Naive thymus-derived CD4-positive, alpha-beta T cell (primary cell): ENCODE measurements at regions of chrX and their contacts with region 1.

Region 1: DNA sequence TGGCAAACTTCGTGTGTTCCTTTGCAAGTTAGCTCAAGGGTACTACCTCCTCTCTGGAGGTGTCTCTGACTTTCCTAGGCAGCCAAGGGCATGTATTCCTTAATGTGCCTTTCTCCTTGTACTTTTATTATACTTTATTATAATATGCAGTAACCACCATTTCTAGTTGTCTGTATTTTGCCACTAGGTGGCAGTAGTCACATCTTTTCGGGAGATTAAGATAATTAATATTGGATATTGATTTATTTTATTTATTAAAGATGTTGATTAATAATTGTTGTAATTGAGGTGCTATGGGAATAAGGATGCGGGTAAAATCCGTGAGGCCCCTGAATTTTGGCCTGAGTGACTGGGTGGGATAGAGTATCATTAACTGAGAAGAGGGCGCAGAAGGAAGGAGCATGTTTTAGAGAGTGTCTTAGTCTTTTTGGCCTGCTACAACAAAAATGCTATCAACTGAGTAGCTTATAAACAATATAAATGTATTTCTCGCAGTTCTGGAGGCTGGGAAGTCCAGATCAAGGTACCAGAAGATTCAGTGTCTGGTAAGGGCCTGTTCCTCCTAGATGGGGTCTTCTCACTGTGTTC is 153.3 kb downstream of the TMEM164 start:
- DNase-seq: peak in 3 of 9 donors; percentile 22 to 27 (median 27)
- ATAC-seq: no peak
- H3K4me3 ChIP-seq: no peak overlapping the region
- H3K4me3 Mint-ChIP-seq: no peak overlapping the region
- H3K27ac ChIP-seq: no peak overlapping the region
- H3K27ac Mint-ChIP-seq: no peak overlapping the region
- H3K4me1 ChIP-seq: no peaks in the 10 kb centered on the region
- H3K4me1 Mint-ChIP-seq: peaks cover 5 to 14% (median 10%) of the 10 kb centered on the region in 7 donors
- H3K27me3 ChIP-seq: no peaks in the 10 kb centered on the region
- H3K27me3 Mint-ChIP-seq: no peaks in the 10 kb centered on the region

Region 2: GRCh38 chrX:110384490-110384889 is 228.2 kb after region 1 on chrX:
- CTCF ChIA-PET with region 1: no interaction called
- POLR2A ChIA-PET with region 1: no interaction called
- intact Hi-C with region 1: no loop called
- DNase-seq: no peak
- ATAC-seq: no peak
- H3K4me3 ChIP-seq: no peak overlapping the region
- H3K4me3 Mint-ChIP-seq: no peak overlapping the region
- H3K27ac ChIP-seq: no peak overlapping the region
- H3K27ac Mint-ChIP-seq: no peak overlapping the region
- H3K4me1 ChIP-seq: no peaks in the 10 kb centered on the region
- H3K4me1 Mint-ChIP-seq: peaks cover 0 to under 1% (median 0%) of the 10 kb centered on the region in 7 donors
- H3K27me3 ChIP-seq: no peaks in the 10 kb centered on the region
- H3K27me3 Mint-ChIP-seq: peaks cover 0 to 13% (median 4%) of the 10 kb centered on the region in 5 donors

Region 3: GRCh38 chrX:110401140-110401539 is 244.9 kb after region 1 on chrX:
- CTCF ChIA-PET with region 1: interaction called, 152 read pairs
- POLR2A ChIA-PET with region 1: interaction called, 5 read pairs
- intact Hi-C with region 1: loop called in 1 of 2 experiments (anchors 2 kb)
- DNase-seq: no peak
- ATAC-seq: no peak
- H3K4me3 ChIP-seq: no peak overlapping the region
- H3K4me3 Mint-ChIP-seq: no peak overlapping the region
- H3K27ac ChIP-seq: no peak overlapping the region
- H3K27ac Mint-ChIP-seq: no peak overlapping the region
- H3K4me1 ChIP-seq: no peaks in the 10 kb centered on the region
- H3K4me1 Mint-ChIP-seq: no peaks in the 10 kb centered on the region
- H3K27me3 ChIP-seq: no peaks in the 10 kb centered on the region
- H3K27me3 Mint-ChIP-seq: peaks cover 0 to 7% (median 0%) of the 10 kb centered on the region in 5 donors

Region 4: GRCh38 chrX:110407910-110408545 is 251.8 kb after region 1 on chrX:
- CTCF ChIA-PET with region 1: interaction called, 152 read pairs
- POLR2A ChIA-PET with region 1: interaction called, 5 read pairs
- intact Hi-C with region 1: loop called (anchors 1 kb)
- DNase-seq: peak; percentile 7 to 67 (median 46)
- ATAC-seq: peak; percentile 71
- H3K4me3 ChIP-seq: no peak overlapping the region
- H3K4me3 Mint-ChIP-seq: no peak overlapping the region
- H3K27ac ChIP-seq: no peak overlapping the region
- H3K27ac Mint-ChIP-seq: no peak overlapping the region
- H3K4me1 ChIP-seq: no peaks in the 10 kb centered on the region
- H3K4me1 Mint-ChIP-seq: peaks cover 0 to 2% (median 0%) of the 10 kb centered on the region in 7 donors
- H3K27me3 ChIP-seq: no peaks in the 10 kb centered on the region
- H3K27me3 Mint-ChIP-seq: peaks cover 0 to 4% (median 0%) of the 10 kb centered on the region in 5 donors

Region 5: GRCh38 chrX:110412971-110413721 is 256.9 kb after region 1 on chrX:
- CTCF ChIA-PET with region 1: interaction called, 152 read pairs
- POLR2A ChIA-PET with region 1: no interaction called
- intact Hi-C with region 1: loop called (anchors 1 kb)
- DNase-seq: peak; percentile 25 to 66 (median 56)
- ATAC-seq: peak; percentile 91
- H3K4me3 ChIP-seq: no peak overlapping the region
- H3K4me3 Mint-ChIP-seq: no peak overlapping the region
- H3K27ac ChIP-seq: no peak overlapping the region
- H3K27ac Mint-ChIP-seq: peak overlapping the region in 1 of 9 donors; percentile 16
- H3K4me1 ChIP-seq: no peaks in the 10 kb centered on the region
- H3K4me1 Mint-ChIP-seq: peaks cover 0 to 6% (median 0%) of the 10 kb centered on the region in 7 donors
- H3K27me3 ChIP-seq: no peaks in the 10 kb centered on the region
- H3K27me3 Mint-ChIP-seq: peaks cover 0 to 4% (median 0%) of the 10 kb centered on the region in 5 donors